ENCODE measurements at regions of chr3 and their contacts with region 1.

Region 1: GRCh38 chr3:151168269-151169094 is 34.5 kb downstream of the GPR171 start:
- DNase-seq: peak; percentile 70
- CTCF ChIP-seq: peak; percentile 92

Region 2: GRCh38 chr3:151011427-151011826 is 157.1 kb before region 1 on chr3:
- CTCF ChIA-PET with region 1: no interaction called
- POLR2A ChIA-PET with region 1: no interaction called
- DNase-seq: no peak
- CTCF ChIP-seq: no peak

Region 3: GRCh38 chr3:151183265-151183671 is 14.8 kb after region 1 on chr3:
- CTCF ChIA-PET with region 1: interaction called, 19 read pairs
- POLR2A ChIA-PET with region 1: no interaction called
- DNase-seq: no peak
- CTCF ChIP-seq: no peak

Region 4: GRCh38 chr3:151210676-151211381 is 42.3 kb after region 1 on chr3:
- CTCF ChIA-PET with region 1: interaction called, 17 read pairs
- POLR2A ChIA-PET with region 1: no interaction called
- DNase-seq: no peak
- CTCF ChIP-seq: peak; percentile 15

Region 5: GRCh38 chr3:151282921-151283320 is 114.4 kb after region 1 on chr3:
- CTCF ChIA-PET with region 1: interaction called, 111 read pairs
- POLR2A ChIA-PET with region 1: no interaction called
- DNase-seq: peak; percentile 50
- CTCF ChIP-seq: peak; percentile 50